Heart left ventricle (tissue), 16 donors: ENCODE measurements at regions of chr11 and their contacts with region 1.

Region 1: DNA sequence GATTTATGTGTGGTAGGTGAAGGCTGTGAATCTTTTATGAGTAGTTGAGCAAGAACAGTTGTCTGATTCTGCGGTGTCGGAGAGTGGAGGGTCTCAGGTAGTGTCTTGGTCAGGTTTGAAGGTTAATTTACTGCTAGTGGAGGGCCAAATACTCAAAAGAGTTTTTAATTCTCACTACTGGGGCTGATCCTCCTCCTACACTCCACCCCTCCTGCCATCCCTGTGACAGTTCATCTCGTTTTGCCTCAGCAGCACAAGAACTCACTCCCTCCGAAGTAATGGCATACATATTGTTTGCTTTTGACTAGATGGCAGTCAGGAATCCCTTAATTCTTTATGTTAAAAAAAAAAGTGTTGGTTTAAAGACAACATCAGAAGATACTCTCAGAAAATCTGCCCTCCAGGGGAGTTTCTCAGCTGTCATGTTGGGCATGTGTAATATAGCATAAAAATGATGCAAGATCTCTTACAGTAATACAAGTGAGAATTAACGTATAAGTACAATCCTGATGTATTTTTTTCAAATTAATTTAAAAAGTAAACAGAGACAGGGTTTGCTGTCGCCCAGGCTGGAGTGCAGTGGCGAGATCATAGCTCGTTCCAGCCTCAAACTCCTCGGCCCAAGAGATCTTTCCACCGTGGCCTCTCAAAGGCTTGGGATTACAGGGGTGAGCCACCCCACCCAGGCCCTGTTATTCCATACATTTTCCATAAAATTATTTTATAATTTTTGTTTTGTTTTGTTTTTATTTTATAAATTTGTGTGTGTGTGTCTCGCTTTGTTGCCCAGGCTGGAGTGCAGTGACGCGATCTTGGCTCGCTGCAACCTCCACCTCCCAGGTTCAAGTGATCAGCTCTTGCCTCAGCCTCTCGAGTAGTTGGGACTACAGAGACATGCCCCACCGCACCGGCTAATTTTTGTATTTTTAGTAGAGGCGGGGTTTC is 1.3 kb downstream of the FAR1 start:
- DNase-seq: no peak
- ATAC-seq: no peak
- H3K4me3 ChIP-seq: peak overlapping the region; percentile 72 to 98 (median 90)
- H3K27ac ChIP-seq: peak overlapping the region in 8 of 12 donors; percentile 78 to 92 (median 90)
- H3K4me1 ChIP-seq: peaks cover 0 to 61% (median 21%) of the 10 kb centered on the region in 12 donors
- H3K27me3 ChIP-seq: no peaks in the 10 kb centered on the region
- CTCF ChIP-seq: no peak
- POLR2A ChIP-seq: no peak

Region 2: DNA sequence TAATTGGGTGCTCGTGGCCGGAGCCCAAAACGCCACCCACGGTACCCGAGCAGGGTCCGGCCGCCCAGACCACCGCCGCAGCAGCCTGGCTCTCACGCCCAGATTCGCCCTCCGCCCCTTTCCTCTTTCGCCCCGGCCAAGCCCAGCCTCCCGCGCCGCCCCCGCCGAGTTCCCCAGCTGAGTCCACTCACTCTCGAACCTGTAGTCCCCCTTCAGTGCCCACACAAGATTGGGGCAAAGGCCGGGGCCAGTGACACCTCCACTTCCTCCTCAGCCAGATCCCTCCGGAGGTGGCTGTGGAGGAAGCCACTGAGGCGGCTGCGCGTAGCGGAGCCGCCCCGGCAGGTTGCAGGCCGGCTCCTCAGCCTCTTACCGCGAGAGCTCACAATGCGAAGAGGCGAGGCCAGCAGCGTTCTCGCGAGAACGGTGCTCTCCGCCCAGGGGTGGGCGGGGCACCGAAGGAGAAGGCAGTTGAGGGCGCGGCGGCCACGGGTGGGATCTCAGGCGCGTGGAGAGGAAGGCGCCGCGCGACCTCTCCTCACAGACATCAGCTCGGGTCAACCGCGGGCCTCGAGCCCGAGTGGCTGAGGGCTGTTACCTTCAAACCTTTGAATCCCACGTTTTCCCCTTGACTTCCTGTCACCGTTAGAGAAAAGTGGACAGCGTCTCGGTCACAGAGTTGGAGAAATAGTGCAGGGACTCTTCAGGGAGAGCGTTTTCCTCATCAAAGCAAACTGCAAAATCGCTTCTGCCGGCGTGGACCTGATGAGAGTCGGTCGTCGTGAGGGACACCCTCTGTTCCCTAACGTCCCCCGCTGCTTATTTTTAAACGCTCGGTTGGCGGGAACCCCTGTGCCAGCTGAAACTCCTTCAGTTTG is 206.7 kb before region 1 on chr11 and contains the start of gene BTBD10:
- intact Hi-C with region 1: loop called in 1 of 10 experiments (anchors 10 kb)
- DNase-seq: peak; percentile 94 to 97 (median 96)
- ATAC-seq: peak; percentile 97 to 100 (median 99)
- H3K4me3 ChIP-seq: peak within 1 kb of the TSS; percentile 68 to 94 (median 80)
- H3K27ac ChIP-seq: peak within 1 kb of the TSS; percentile 61 to 94 (median 89)
- H3K4me1 ChIP-seq: peaks cover 0 to 39% (median 13%) of the 10 kb centered on the region in 12 donors
- H3K27me3 ChIP-seq: no peaks in the 10 kb centered on the region
- CTCF ChIP-seq: peak in 1 of 12 donors; percentile 8
- POLR2A ChIP-seq: peak in 1 of 2 donors; percentile 92
- total RNA-seq, gene BTBD10: 22.6 to 31.4 (median 25.8) TPM

Region 3: DNA sequence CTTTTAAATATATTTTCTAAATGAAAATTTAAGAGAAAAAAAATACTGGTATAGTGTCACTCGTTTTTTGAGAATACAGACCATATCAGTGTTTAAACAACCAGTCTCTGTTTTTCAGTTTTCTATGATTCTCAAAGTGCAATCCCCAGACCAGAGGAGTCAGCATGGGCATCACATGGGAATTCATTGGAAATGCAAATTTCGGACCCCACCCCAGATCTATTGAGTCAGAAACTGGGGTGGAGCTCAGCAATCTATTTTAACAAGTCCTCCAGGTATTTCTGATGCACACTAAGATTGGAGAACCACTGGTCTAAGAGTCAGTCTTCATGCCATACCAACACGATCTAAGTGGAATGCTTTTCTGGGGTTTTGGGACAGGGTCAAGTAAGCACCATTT is 64.7 kb after region 1 on chr11:
- intact Hi-C with region 1: no loop called
- DNase-seq: no peak
- ATAC-seq: no peak
- H3K4me3 ChIP-seq: no peak overlapping the region
- H3K27ac ChIP-seq: no peak overlapping the region
- H3K4me1 ChIP-seq: peaks cover 0 to 6% (median 0%) of the 10 kb centered on the region in 12 donors
- H3K27me3 ChIP-seq: no peaks in the 10 kb centered on the region
- CTCF ChIP-seq: no peak
- POLR2A ChIP-seq: no peak